ENCODE measurements at regions of chr15 and their contacts with region 1.

Region 1: GRCh38 chr15:88246666-88247446 is 9.7 kb downstream of the NTRK3 start:
- DNase-seq: peak; percentile 90
- H3K4me3 Mint-ChIP-seq: no peak overlapping the region
- H3K27ac Mint-ChIP-seq: no peak overlapping the region
- H3K4me1 Mint-ChIP-seq: no peaks in the 10 kb centered on the region
- H3K27me3 Mint-ChIP-seq: peaks cover 2% of the 10 kb centered on the region

Region 2: DNA sequence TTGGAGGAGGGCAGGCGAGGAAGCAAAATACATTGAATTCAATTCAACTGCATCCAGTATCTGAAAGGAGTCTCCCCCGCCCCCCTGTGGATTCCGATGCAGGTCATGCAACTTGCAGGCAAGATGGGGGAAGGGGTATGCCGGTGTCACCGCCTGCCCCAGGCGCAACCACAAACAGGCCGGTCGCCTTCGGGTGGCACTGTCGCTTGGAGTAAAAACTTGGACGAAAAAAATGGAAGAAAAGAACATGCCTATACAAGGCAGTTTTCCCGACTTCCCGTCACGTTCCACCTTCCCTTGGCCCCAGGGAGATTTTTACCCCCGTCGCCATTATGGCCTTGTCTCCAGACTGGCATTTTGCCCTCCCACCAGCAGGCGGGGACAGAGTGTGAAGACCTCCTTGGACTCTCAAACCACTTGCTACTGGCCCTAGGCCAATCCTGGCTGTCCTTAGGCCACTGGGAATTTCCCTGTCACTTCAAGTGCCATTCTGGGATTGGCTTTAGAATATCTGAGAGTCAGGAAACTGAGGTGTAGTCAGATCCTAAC is 11.3 kb after region 1 on chr15:
- intact Hi-C with region 1: loop called (anchors 2 kb)
- DNase-seq: no peak
- H3K4me3 Mint-ChIP-seq: peak overlapping the region; percentile 83
- H3K27ac Mint-ChIP-seq: no peak overlapping the region
- H3K4me1 Mint-ChIP-seq: peaks cover 11% of the 10 kb centered on the region
- H3K27me3 Mint-ChIP-seq: peaks cover 58% of the 10 kb centered on the region

Region 3: GRCh38 chr15:88454867-88455810 is 208.3 kb after region 1 on chr15:
- intact Hi-C with region 1: loop called (anchors 5 kb)
- DNase-seq: peak; percentile 81
- H3K4me3 Mint-ChIP-seq: no peak overlapping the region
- H3K27ac Mint-ChIP-seq: no peak overlapping the region
- H3K4me1 Mint-ChIP-seq: peaks cover 2% of the 10 kb centered on the region
- H3K27me3 Mint-ChIP-seq: no peaks in the 10 kb centered on the region

Region 4: GRCh38 chr15:88918738-88919137 is 671.9 kb after region 1 on chr15:
- intact Hi-C with region 1: no loop called
- DNase-seq: no peak
- H3K4me3 Mint-ChIP-seq: peak overlapping the region; percentile 23
- H3K27ac Mint-ChIP-seq: peak overlapping the region; percentile 5
- H3K4me1 Mint-ChIP-seq: peaks cover 23% of the 10 kb centered on the region
- H3K27me3 Mint-ChIP-seq: peaks cover 9% of the 10 kb centered on the region